Activated CD4-positive, alpha-beta T cell treated with anti-CD3 and anti-CD28 coated beads, Interleukin-2, amount 10 ng/mL, durations not matched to agents 24 days and 14 days (primary cell): ENCODE measurements at regions of chr5 and their contacts with region 1.

Region 1: GRCh38 chr5:179821581-179822432 is 1.1 kb downstream of the SQSTM1 start:
- DNase-seq: peak; percentile 96
- H3K4me3 Mint-ChIP-seq: peak overlapping the region; percentile 96
- H3K27ac Mint-ChIP-seq: peak overlapping the region; percentile 91
- H3K4me1 Mint-ChIP-seq: peaks cover 35% of the 10 kb centered on the region
- H3K27me3 Mint-ChIP-seq: no peaks in the 10 kb centered on the region

Region 2: DNA sequence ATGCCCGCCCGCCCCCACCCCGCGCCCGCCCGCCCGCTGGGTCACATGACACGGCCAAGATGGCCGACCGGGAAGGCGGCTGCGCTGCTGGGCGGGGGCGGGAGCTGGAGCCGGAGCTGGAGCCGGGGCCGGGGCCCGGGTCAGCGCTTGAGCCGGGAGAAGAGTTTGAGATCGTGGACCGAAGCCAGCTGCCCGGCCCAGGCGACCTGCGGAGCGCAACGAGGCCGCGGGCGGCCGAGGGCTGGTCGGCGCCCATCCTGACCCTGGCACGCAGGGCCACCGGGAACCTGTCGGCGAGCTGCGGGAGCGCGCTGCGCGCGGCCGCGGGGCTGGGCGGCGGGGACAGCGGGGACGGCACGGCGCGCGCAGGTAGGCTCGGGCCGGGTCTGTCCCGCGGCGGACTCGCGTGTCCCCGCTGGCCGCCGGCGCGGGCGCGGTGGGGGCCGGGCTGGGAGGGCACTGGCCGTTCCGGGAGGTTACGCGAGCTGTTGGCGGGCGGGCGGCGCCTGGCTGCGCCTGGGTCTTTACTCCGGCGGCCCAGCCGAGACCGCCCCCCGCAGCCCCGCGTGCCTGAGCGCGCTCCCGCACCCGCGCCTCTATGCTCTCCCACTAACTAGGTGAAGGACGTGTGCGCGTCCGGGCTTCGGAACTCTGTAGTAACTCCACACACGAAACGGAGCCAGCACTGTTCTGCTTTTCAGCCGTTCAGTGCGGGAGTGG is 271.1 kb before region 1 on chr5 and contains the start of gene RUFY1:
- intact Hi-C with region 1: loop called (anchors 5 kb)
- DNase-seq: peak; percentile 96
- H3K4me3 Mint-ChIP-seq: peak within 1 kb of the TSS; percentile 97
- H3K27ac Mint-ChIP-seq: peak within 1 kb of the TSS; percentile 99
- H3K4me1 Mint-ChIP-seq: peaks cover 23% of the 10 kb centered on the region
- H3K27me3 Mint-ChIP-seq: peaks cover 2% of the 10 kb centered on the region
- total RNA-seq, gene RUFY1: 38.8 and 40.6 TPM in 2 replicates

Region 3: DNA sequence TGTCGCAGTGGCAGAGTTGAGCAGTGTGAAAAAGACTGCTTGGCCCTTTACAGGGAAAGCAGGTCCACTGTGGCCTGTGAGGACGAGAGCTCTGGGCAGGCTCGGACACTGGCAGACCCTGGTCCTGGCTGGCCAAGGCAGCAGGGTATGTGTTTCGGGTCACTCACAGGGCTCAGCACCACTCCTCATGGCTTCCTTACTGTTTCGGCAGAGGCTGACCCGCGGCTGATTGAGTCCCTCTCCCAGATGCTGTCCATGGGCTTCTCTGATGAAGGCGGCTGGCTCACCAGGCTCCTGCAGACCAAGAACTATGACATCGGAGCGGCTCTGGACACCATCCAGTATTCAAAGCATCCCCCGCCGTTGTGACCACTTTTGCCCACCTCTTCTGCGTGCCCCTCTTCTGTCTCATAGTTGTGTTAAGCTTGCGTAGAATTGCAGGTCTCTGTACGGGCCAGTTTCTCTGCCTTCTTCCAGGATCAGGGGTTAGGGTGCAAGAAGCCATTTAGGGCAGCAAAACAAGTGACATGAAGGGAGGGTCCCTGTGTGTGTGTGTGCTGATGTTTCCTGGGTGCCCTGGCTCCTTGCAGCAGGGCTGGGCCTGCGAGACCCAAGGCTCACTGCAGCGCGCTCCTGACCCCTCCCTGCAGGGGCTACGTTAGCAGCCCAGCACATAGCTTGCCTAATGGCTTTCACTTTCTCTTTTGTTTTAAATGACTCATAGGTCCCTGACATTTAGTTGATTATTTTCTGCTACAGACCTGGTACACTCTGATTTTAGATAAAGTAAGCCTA is 14.6 kb after region 1 on chr5:
- intact Hi-C with region 1: loop called (anchors 2 kb)
- DNase-seq: peak; percentile 89
- H3K4me3 Mint-ChIP-seq: peak overlapping the region; percentile 61
- H3K27ac Mint-ChIP-seq: peak overlapping the region; percentile 87
- H3K4me1 Mint-ChIP-seq: peaks cover 18% of the 10 kb centered on the region
- H3K27me3 Mint-ChIP-seq: no peaks in the 10 kb centered on the region